Tibial artery (tissue), 4 donors: ENCODE measurements at regions of chr4 and their contacts with region 1.

Region 1: DNA sequence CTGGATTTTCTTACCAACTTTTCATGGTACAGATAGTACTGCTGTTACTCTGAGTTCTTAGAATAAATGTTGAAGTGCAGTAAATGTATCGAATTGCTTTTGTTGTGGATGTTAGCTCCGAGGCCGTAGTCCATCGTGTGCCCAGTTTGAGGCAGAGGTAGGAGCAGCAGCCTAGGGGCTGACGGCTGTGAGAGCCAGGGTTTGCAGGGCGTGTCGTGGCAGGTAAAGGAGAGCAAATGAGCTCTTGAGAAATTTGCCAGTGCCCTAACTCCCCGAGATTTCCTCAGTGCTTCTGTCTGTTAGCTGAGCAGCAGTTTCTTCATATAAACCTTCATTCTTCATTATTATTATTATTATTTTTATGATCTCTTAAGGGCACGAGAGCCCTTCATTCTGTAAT is 21.6 kb downstream of the PRIMPOL start:
- DNase-seq: no peak
- H3K4me3 ChIP-seq: no peak overlapping the region
- H3K27ac ChIP-seq: no peak overlapping the region
- H3K4me1 ChIP-seq: no peaks in the 10 kb centered on the region
- H3K27me3 ChIP-seq: no peaks in the 10 kb centered on the region
- CTCF ChIP-seq: no peak

Region 2: DNA sequence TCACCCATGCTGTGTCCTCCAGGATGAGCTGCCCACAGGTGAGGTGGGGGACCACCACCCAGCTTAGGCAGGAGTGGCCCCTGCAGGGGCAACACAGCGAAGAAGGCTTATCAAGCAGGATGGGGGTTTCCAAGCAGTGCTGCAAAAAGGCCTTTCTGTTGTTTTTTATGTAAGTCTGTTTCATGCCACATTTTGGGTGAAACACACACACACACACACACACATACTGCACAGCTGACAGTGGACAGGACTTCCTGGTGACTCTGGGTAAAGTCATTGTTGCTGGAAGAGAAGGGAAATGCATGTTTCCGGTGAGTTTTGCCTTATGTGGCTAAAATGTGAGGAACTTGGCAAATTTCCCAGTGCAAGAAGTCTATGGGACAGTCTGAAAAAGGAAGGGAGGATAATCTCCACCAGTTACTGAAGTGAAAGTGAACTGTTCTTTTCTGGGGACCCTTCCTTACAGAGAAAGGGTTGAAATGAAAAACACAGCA is 315.9 kb before region 1 on chr4:
- intact Hi-C with region 1: no loop called
- DNase-seq: peak; percentile 64 to 80
- H3K4me3 ChIP-seq: no peak overlapping the region
- H3K27ac ChIP-seq: peak overlapping the region; percentile 16 to 30
- H3K4me1 ChIP-seq: peaks cover 0 to 27% (median 3%) of the 10 kb centered on the region in 4 donors
- H3K27me3 ChIP-seq: no peaks in the 10 kb centered on the region
- CTCF ChIP-seq: no peak

Region 3: GRCh38 chr4:184702114-184702513 is 31.0 kb after region 1 on chr4:
- intact Hi-C with region 1: loop called (anchors 1 kb)
- DNase-seq: no peak
- H3K4me3 ChIP-seq: no peak overlapping the region
- H3K27ac ChIP-seq: no peak overlapping the region
- H3K4me1 ChIP-seq: peaks cover 0 to 8% (median 0%) of the 10 kb centered on the region in 4 donors
- H3K27me3 ChIP-seq: no peaks in the 10 kb centered on the region
- CTCF ChIP-seq: no peak